Activated T-helper 1 cell treated with anti-CD3 and anti-CD28 coated beads, Interleukin-12 subunit alpha, Interleukin-12 subunit beta, Interleukin-2, Interleukin-4 antibody, amounts not matched to agents 30 ng/mL and 10 ng/mL and 1 ng/mL, durations not matched to agents 14 hours and 24 hours and 36 hours (primary cell): ENCODE measurements at regions of chr2 and their contacts with region 1.

Region 1: DNA sequence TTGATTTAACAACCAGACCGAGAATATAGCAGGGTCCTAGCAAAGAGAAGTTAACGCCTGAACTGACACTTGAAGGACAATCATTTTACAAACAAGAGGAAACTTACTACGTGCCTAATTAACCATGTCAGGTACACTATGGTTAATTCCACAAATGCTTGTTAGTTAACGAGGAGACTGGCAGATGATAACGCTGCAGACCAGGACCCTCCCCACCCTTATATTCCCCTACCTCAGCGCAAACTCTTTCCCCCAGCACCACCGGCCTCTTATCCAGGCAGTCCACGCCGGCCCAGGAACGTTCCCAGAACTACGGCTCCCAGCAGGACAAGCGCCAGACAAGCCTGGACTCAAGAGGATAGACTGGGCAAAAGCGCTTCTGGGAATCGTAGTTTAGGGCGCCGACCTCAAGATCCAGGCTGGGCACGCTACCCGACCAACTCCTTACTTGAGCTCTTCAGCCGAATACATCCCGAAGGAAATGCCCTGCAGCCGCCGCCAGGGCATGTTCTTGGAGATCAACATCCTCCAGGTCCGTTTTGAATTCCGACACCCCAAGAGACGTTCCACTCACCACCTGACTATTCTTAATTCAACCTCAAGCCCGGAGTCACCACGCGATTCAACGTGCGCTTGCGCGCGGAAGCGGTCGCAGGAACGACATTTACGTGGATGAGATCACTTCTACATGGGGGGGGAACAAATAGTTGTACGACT is at the start of gene POLR1A:
- DNase-seq: peak; percentile 84
- H3K4me3 Mint-ChIP-seq: peak within 1 kb of the TSS; percentile 91
- H3K27ac Mint-ChIP-seq: peak within 1 kb of the TSS; percentile 99
- H3K4me1 Mint-ChIP-seq: peaks cover 55% of the 10 kb centered on the region
- H3K27me3 Mint-ChIP-seq: no peaks in the 10 kb centered on the region
- total RNA-seq, gene POLR1A: 69.7 and 74.6 TPM in 2 replicates

Region 2: GRCh38 chr2:85611705-85612587 is 493.5 kb before region 1 on chr2 and contains the start of gene C2orf68:
- intact Hi-C with region 1: loop called (anchors 1 kb)
- DNase-seq: peak; percentile 86
- H3K4me3 Mint-ChIP-seq: peak within 1 kb of the TSS; percentile 98
- H3K27ac Mint-ChIP-seq: peak within 1 kb of the TSS; percentile 89
- H3K4me1 Mint-ChIP-seq: peaks cover 12% of the 10 kb centered on the region
- H3K27me3 Mint-ChIP-seq: no peaks in the 10 kb centered on the region
- total RNA-seq, gene C2orf68: 36.3 and 36.7 TPM in 2 replicates

Region 3: DNA sequence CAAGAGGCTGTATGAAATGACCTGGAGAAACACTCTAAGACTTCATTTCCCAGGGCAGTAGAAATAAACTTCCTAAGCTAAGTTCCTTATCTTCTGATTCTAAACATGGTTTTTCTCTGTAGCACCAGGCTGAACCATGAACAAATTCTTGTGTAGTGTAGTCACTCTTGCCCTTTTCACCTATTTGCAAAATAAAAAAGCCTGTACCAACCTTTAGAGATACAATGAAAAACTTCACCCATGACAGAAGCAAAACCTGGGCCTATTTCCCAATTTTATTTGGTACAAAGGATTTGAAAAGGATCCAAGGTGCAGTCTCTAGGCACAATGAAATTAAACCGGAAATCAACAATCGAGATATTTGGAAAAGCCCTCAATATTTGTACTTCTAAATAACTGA is 43.4 kb before region 1 on chr2:
- intact Hi-C with region 1: no loop called
- DNase-seq: no peak
- H3K4me3 Mint-ChIP-seq: no peak overlapping the region
- H3K27ac Mint-ChIP-seq: no peak overlapping the region
- H3K4me1 Mint-ChIP-seq: peaks cover 5% of the 10 kb centered on the region
- H3K27me3 Mint-ChIP-seq: no peaks in the 10 kb centered on the region

Region 4: GRCh38 chr2:86079981-86080911 is 25.2 kb before region 1 on chr2:
- intact Hi-C with region 1: loop called (anchors 1 kb)
- DNase-seq: peak; percentile 73
- H3K4me3 Mint-ChIP-seq: no peak overlapping the region
- H3K27ac Mint-ChIP-seq: peak overlapping the region; percentile 71
- H3K4me1 Mint-ChIP-seq: peaks cover 47% of the 10 kb centered on the region
- H3K27me3 Mint-ChIP-seq: no peaks in the 10 kb centered on the region